ENCODE measurements at regions of chr6 and their contacts with region 1.

Region 1: GRCh38 chr6:33425668-33426577 is 6.1 kb downstream of the SYNGAP1 start:
- DNase-seq: peak; percentile 89
- ATAC-seq: peak; percentile 81

Region 2: DNA sequence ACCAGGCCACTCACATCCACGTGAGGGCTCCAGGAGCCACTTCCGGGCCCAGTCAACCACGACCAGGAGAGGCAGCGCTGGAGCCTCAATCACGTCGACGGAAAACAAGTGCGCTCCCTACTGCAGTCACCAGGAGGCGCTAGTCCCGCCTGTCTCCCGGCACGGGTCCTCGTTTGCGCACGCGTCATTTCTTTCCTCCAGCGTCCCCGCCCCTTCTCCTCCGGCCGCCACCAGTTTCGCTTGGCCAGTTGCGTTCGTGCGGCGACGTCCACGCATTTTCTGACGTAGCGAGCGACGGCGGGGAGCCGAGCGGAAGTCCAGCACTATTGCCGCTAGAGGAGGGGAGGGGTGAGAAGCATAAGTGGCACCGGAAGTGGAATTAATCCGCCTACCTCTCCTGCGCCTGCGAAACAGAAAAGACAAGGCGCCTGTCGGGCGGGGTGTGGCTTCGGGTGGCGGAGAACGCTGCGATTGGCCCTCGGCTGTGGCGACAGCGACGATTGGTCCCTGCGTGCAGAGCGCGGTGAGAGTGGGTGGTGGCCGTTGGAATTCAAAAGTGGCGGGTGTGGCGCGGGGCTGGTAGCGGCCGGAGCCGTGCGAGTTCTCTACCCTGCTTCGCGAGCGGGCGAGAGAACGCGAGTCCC is 34.5 kb before region 1 on chr6 and contains the start of gene KIFC1:
- intact Hi-C with region 1: loop called (anchors 2 kb)
- DNase-seq: peak; percentile 99
- ATAC-seq: peak; percentile 98
- total RNA-seq, gene KIFC1: 0.97 TPM

Region 3: DNA sequence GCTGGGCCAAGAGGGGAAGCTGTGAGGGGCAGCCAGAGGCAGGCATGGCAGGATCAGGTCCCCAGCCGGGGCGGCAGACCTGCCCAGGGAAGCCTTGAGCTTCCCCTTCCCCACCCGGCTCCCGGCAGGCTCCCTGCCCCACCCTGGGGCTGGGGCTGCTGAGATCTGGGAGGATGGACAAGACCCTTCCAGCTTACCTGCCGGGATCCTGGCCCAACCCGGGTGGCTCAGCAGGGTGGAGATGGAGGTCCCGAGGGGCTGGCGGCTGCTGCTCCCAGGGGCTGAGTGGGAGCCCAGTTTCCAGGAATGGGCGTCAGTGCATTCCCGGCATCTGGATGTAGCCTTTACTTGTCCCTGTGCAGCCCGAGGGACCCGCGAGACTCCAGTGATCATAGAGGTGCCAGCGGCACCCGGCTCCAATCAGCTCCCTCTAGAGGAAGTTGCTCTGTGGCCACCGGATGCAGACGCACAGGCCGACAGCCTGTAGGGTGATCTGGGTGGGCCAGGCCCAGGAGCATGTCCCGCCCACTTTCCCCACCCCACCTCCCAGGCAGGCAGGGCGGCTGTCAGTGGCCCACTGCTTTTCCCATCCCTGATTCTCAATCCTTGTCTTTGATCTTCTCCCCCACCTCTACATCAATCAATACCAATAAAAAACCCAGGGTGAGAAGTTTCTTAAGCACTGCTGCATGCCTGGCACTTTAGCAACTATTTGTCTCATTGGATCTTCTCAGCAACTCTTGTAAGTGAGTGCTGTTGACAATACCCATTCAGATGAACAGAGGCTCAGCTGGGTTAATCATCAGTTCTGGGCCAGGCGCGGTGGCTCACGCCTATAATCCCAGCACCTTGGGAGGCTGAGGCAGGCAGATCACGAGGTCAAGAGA is 154.1 kb after region 1 on chr6 and contains the start of gene BAK1:
- intact Hi-C with region 1: loop called (anchors 10 kb)
- DNase-seq: peak; percentile 95
- ATAC-seq: peak; percentile 97
- total RNA-seq, gene BAK1: 25.0 TPM